SK-N-SH (cell line): ENCODE measurements at regions of chrX and their contacts with region 1.

Region 1: GRCh38 chrX:10769195-10769594 is 148.8 kb upstream of the MID1 start:
- DNase-seq: peak; percentile 36
- H3K4me3 ChIP-seq: no peak overlapping the region; a peak in 1 of 4 replicates
- H3K27ac ChIP-seq: no peak overlapping the region
- H3K4me1 ChIP-seq: no peaks in the 10 kb centered on the region; a peak in 2 of 4 replicates
- H3K27me3 ChIP-seq: no peaks in the 10 kb centered on the region
- CTCF ChIP-seq: peak; percentile 62
- EP300 ChIP-seq: no peak
- RAD21 ChIP-seq: peak; percentile 60

Region 2: DNA sequence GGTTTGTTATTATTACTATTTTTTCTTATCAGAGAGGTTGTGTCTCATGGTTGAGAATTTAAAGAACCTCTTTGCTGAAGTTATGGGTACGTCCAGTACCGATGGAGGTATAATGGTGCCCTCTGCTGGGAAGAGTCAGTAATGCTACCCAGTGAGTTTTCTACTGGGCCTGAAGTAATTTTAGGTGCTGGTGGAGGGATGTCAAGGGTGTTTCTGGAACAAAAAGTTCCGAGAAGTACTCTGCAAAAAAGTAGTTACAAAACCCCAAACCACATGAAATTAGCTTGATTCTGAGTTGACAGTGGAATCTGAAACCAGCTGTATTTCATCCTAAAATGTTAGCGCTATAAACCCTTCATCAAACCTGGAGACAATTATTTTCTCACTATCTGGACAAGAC is 46.3 kb before region 1 on chrX:
- CTCF ChIA-PET with region 1: interaction called, 10 read pairs
- POLR2A ChIA-PET with region 1: no interaction called
- DNase-seq: peak; percentile 65
- H3K4me3 ChIP-seq: no peak overlapping the region
- H3K27ac ChIP-seq: no peak overlapping the region
- H3K4me1 ChIP-seq: no peaks in the 10 kb centered on the region
- H3K27me3 ChIP-seq: no peaks in the 10 kb centered on the region
- CTCF ChIP-seq: peak; percentile 90
- EP300 ChIP-seq: no peak
- RAD21 ChIP-seq: peak; percentile 80

Region 3: GRCh38 chrX:10781847-10782530 is 12.8 kb after region 1 on chrX:
- CTCF ChIA-PET with region 1: interaction called, 13 read pairs
- POLR2A ChIA-PET with region 1: no interaction called
- DNase-seq: no peak
- H3K4me3 ChIP-seq: no peak overlapping the region
- H3K27ac ChIP-seq: no peak overlapping the region
- H3K4me1 ChIP-seq: no peaks in the 10 kb centered on the region; a peak in 1 of 4 replicates
- H3K27me3 ChIP-seq: no peaks in the 10 kb centered on the region
- CTCF ChIP-seq: no peak
- EP300 ChIP-seq: no peak
- RAD21 ChIP-seq: no peak

Region 4: GRCh38 chrX:10794203-10794630 is 25.0 kb after region 1 on chrX:
- CTCF ChIA-PET with region 1: interaction called, 11 read pairs
- POLR2A ChIA-PET with region 1: no interaction called
- DNase-seq: no peak
- H3K4me3 ChIP-seq: no peak overlapping the region
- H3K27ac ChIP-seq: no peak overlapping the region
- H3K4me1 ChIP-seq: peaks cover 0 to 6% of the 10 kb centered on the region in 2 experiments; a peak in 1 of 4 replicates
- H3K27me3 ChIP-seq: no peaks in the 10 kb centered on the region
- CTCF ChIP-seq: no peak
- EP300 ChIP-seq: no peak
- RAD21 ChIP-seq: no peak